Gastrocnemius medialis (tissue), 4 donors: ENCODE measurements at regions of chr3 and their contacts with region 1.

Region 1: DNA sequence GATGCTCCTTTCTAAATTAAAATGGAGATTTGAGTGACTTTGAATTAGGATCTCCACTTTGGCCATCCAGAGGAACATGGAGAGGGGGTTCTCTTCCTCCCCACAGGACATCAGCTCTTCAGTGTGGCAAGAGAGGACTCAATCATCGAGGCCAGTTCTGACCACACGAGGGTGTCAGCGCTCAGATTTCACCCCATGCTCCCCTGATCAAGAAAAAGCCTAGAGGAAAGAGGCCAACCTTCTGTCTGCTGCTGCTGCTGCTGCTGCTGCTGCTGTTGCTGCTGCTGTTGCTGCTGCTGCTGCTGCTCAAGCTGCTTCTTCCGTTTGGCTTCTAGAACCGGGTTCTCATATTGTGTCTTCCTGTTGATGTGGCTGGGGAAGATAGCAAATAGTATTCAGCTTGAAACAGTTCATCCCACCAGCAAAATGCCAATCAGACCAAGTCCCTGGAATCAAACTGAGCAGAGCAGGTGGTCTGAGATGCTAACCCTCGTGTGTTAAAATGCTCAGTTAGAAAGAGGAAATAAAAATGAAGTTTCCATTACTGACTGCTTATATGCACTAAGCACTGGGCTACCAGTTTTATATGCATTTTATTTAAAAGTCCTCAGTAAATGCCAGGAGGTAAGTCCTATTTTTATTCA is 599.0 kb downstream of the MAGI1 start:
- DNase-seq: peak; percentile 10 to 17
- ATAC-seq: peak; percentile 74 to 85
- H3K4me3 ChIP-seq: no peak overlapping the region
- H3K27ac ChIP-seq: no peak overlapping the region
- H3K4me1 ChIP-seq: no peaks in the 10 kb centered on the region
- H3K27me3 ChIP-seq: no peaks in the 10 kb centered on the region
- CTCF ChIP-seq: peak; percentile 12 to 64 (median 56)
- POLR2A ChIP-seq: no peak

Region 2: DNA sequence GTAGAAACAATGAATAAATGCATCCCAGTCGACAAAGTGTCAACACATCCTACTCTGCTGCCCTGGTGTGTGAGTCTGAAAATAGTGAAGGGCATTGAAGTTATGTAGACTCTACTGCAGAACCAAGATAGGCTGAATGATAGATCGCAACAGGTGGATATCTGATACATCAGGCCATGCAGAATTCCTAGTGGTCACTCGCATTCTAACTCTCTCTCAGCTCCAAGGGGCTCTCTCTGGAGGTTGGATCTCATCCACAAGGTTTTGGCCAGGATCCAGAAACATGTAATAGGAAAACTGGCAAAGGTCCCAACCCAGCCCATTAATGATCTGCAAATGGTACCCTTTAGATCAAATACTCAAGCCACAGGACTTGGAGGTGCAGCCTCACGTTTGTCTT is 84.8 kb after region 1 on chr3:
- in situ Hi-C with region 1: no loop called
- intact Hi-C with region 1: no loop called
- DNase-seq: no peak
- ATAC-seq: no peak
- H3K4me3 ChIP-seq: no peak overlapping the region
- H3K27ac ChIP-seq: no peak overlapping the region
- H3K4me1 ChIP-seq: peaks cover 9 to 17% of the 10 kb centered on the region in 2 donors
- H3K27me3 ChIP-seq: no peaks in the 10 kb centered on the region
- CTCF ChIP-seq: no peak
- POLR2A ChIP-seq: no peak

Region 3: GRCh38 chr3:65551945-65552344 is 112.2 kb after region 1 on chr3:
- in situ Hi-C with region 1: no loop called
- intact Hi-C with region 1: no loop called
- DNase-seq: no peak
- ATAC-seq: no peak
- H3K4me3 ChIP-seq: no peak overlapping the region
- H3K27ac ChIP-seq: no peak overlapping the region
- H3K4me1 ChIP-seq: peaks cover 9 to 12% of the 10 kb centered on the region in 2 donors
- H3K27me3 ChIP-seq: no peaks in the 10 kb centered on the region
- CTCF ChIP-seq: no peak
- POLR2A ChIP-seq: no peak

Region 4: DNA sequence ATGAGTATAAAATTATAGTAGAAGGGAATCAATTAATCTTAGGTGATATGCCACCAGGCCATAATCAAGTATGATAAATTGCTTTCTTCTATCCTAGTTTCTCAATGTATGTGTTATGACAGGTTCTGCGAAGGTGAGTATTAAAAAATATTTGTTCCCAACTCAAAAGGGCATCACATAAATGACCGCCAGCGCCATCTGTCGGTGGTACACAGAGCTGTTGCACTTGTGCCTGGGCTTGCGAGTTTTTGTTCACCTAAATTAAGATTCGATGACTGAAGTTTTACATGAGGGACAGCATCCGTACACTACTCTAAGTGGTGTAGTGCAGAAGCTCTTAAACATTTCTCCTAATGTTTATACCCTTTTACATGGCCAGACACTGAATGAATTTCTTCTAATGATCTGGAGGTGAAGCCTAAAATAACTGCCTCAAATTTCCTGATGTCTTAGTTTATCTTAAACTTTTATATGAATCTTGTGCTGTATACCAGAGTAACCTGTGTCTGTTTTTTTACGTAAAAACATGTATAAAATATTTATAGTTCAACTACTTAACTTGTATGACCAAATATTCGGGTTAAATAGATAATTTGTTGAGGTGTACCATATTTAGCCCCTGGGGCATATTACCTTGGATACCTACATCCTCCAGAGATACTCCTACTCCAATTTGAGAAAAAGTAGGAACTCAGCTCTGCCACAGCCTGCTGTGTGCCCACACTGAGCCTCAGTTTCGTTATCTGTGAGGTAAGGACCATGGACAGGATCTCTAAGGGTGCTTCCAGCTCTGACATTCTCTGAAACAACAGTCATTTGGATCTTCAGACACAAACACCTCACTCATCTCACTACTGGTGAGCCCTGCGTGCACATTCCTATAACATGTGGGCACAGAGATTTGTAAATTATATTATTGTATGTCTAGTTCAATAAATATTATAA is 233.4 kb after region 1 on chr3:
- in situ Hi-C with region 1: loop called in 2 of 4 experiments (anchors 10 kb)
- intact Hi-C with region 1: loop called (anchors 1 kb)
- DNase-seq: peak; percentile 5 to 38
- ATAC-seq: peak in 1 of 2 donors; percentile 39
- H3K4me3 ChIP-seq: no peak overlapping the region
- H3K27ac ChIP-seq: no peak overlapping the region
- H3K4me1 ChIP-seq: no peaks in the 10 kb centered on the region
- H3K27me3 ChIP-seq: no peaks in the 10 kb centered on the region
- CTCF ChIP-seq: peak; percentile 56 to 87 (median 76)
- POLR2A ChIP-seq: no peak

Region 5: DNA sequence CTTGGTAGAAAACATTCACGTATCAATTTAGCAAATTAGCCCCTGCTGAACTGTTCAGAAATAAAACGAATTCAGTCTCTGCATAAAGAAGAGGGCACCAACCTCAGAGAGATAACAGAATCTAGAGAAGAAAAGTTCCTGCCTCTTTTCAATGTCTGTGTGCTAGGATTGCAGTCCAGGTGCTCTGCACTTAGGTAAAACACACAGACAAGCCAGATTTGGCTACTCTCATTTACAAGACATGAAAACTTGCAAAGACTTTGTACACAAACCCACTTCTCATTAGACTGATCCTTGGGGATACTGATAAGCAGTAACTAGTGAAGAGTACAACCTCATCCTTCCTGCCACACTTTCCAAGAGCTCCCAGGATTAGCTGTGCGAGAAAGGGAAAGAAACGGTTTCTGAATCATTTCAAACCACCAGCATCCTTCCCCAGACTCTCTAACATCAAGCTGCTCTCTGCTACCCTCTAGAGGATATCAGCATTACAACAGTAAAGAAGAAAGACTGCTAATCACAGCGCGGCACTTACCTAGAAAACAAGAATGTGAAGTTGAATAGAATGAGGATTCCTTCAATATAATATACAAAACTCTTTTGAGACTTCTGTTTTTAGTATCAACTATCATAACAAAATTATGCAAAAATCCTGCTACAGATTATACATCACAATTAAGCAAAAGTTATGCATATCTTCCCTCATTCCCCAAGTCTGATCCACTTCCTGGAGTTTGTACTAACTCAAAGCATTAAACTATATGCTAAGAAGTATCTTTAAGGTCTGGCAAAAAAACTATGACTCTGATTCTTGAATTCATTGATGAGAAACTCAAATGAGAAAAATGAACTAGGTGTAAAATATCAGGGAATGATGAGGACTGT is 292.5 kb after region 1 on chr3:
- in situ Hi-C with region 1: loop called in 2 of 4 experiments (anchors 10 kb)
- intact Hi-C with region 1: loop called (anchors 2 kb)
- DNase-seq: no peak
- ATAC-seq: peak; percentile 79 to 87
- H3K4me3 ChIP-seq: no peak overlapping the region
- H3K27ac ChIP-seq: no peak overlapping the region
- H3K4me1 ChIP-seq: peaks cover 11 to 14% of the 10 kb centered on the region in 2 donors
- H3K27me3 ChIP-seq: no peaks in the 10 kb centered on the region
- CTCF ChIP-seq: peak in 4 of 5 experiments; percentile 43 to 78 (median 65)
- POLR2A ChIP-seq: no peak